ENCODE measurements at regions of chr15 and their contacts with region 1.

Region 1: GRCh38 chr15:90869601-90870353 is 1.4 kb downstream of the FURIN start:
- DNase-seq: peak; percentile 95
- H3K4me3 Mint-ChIP-seq: peak overlapping the region; percentile 76
- H3K27ac Mint-ChIP-seq: peak overlapping the region; percentile 89
- H3K4me1 Mint-ChIP-seq: peaks cover 40% of the 10 kb centered on the region
- H3K27me3 Mint-ChIP-seq: no peaks in the 10 kb centered on the region
- CTCF ChIP-seq: no peak

Region 2: GRCh38 chr15:90648137-90649070 is 221.4 kb before region 1 on chr15:
- CTCF ChIA-PET with region 1: interaction called, 6 read pairs
- POLR2A ChIA-PET with region 1: no interaction called
- intact Hi-C with region 1: loop called (anchors 5 kb)
- DNase-seq: peak; percentile 78
- H3K4me3 Mint-ChIP-seq: peak overlapping the region; percentile 20
- H3K27ac Mint-ChIP-seq: no peak overlapping the region
- H3K4me1 Mint-ChIP-seq: peaks cover 7% of the 10 kb centered on the region
- H3K27me3 Mint-ChIP-seq: no peaks in the 10 kb centered on the region
- CTCF ChIP-seq: peak; percentile 90

Region 3: DNA sequence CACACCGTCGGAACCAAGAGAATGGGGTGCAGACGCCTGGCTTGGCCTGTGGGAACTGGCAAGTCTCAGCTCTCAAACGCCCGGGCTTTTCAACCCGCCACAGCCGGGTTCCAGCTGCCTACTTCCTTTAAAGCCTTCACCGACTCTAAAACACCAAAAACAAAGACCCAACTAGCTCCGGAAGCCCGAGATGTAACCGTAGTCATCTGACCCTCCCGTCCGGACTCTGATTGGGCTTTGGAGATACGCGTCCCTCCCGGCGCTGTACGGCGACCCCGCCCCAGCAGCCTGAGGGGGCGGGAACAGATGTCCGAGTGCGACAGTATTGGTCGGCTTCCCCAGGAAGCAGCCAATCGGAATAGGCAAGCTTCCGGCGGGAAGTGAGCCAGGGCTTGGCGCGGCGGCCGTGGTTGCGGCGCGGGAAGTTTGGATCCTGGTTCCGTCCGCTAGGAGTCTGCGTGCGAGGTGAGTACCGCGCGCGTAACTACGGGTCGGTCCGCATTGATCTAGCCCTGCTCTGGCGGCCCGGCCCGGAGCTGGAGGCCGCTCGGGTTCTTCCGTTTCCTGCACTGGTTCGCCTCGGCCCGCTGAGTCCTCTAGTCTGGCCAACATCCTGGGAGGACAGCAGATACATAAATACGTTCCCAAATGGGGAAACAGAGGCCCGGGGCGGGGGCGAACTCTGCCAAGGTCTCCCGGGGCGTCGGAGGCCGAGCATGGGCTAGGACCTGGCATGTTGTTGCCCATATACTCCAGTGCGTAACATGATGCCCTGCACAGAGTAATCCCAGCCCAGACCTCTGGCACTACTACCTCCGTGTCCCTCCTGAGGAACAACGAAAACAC is 152.6 kb before region 1 on chr15 and contains the start of gene BLM:
- CTCF ChIA-PET with region 1: no interaction called
- POLR2A ChIA-PET with region 1: interaction called, 21 read pairs
- intact Hi-C with region 1: loop called (anchors 2 kb)
- DNase-seq: peak; percentile 97
- H3K4me3 Mint-ChIP-seq: peak within 1 kb of the TSS; percentile 95
- H3K27ac Mint-ChIP-seq: peak within 1 kb of the TSS; percentile 88
- H3K4me1 Mint-ChIP-seq: peaks cover 13% of the 10 kb centered on the region
- H3K27me3 Mint-ChIP-seq: no peaks in the 10 kb centered on the region
- CTCF ChIP-seq: peak; percentile 22
- total RNA-seq, gene BLM: 2.8 and 5.2 TPM in 2 replicates

Region 4: GRCh38 chr15:90902040-90902839 is 32.5 kb after region 1 on chr15:
- CTCF ChIA-PET with region 1: interaction called, 3 read pairs
- POLR2A ChIA-PET with region 1: interaction called, 11 read pairs
- intact Hi-C with region 1: no loop called
- DNase-seq: peak; percentile 81
- H3K4me3 Mint-ChIP-seq: peak overlapping the region; percentile 82
- H3K27ac Mint-ChIP-seq: peak overlapping the region; percentile 57
- H3K4me1 Mint-ChIP-seq: peaks cover 10% of the 10 kb centered on the region
- H3K27me3 Mint-ChIP-seq: no peaks in the 10 kb centered on the region
- CTCF ChIP-seq: peak; percentile 62